Activated naive CD4-positive, alpha-beta T cell treated with anti-CD3 and anti-CD28 coated beads for 36 hours (primary cell): ENCODE measurements at regions of chr11 and their contacts with region 1.

Region 1: GRCh38 chr11:64240394-64241174 is at the start of gene FKBP2:
- DNase-seq: peak; percentile 97
- H3K4me3 Mint-ChIP-seq: peak within 1 kb of the TSS; percentile 92
- H3K27ac Mint-ChIP-seq: peak within 1 kb of the TSS; percentile 98
- H3K4me1 Mint-ChIP-seq: peaks cover 35% of the 10 kb centered on the region
- H3K27me3 Mint-ChIP-seq: no peaks in the 10 kb centered on the region
- total RNA-seq, gene FKBP2: 17.2 to 20.0 TPM

Region 2: DNA sequence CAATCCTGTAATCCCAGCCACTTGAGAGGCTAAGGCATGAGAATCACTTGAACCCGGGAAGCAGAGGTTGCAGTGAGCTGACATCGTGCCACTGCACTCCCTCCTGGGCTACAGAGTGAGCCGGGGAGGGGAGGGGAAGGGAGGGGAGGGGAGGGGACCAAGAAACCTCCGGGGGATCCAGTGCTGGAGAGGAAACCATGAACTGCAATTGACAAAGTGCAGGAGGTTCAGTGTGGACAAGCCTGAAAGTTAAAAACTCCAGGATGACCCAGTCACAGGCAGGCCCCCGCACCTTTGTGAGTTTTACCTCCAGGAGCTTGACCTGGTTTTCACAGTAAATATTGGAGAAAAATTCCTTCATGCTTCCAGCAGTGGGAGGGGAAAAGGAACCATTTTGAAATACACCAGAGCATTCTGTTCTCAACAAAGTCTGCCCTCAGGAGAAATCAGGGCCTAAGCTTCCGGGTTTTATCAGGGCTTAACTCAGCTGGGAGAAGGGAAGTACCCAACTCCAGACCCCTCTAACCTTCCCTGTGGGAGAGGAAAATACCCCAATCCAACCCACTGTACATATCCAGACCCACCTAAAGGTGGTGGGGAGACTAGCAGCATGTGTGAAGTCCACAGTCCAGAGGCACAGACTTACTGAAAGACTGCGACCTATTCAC is 456.5 kb before region 1 on chr11:
- CTCF ChIA-PET with region 1: no interaction called
- intact Hi-C with region 1: no loop called
- DNase-seq: no peak
- H3K4me3 Mint-ChIP-seq: no peak overlapping the region
- H3K27ac Mint-ChIP-seq: no peak overlapping the region
- H3K4me1 Mint-ChIP-seq: peaks cover 9% of the 10 kb centered on the region
- H3K27me3 Mint-ChIP-seq: no peaks in the 10 kb centered on the region

Region 3: GRCh38 chr11:64225612-64226506 is 14.7 kb before region 1 on chr11 and contains the starts of genes NUDT22 and TRPT1:
- CTCF ChIA-PET with region 1: interaction called, 3 read pairs
- intact Hi-C with region 1: loop called (anchors 1 kb)
- DNase-seq: peak; percentile 94
- H3K4me3 Mint-ChIP-seq: peak within 1 kb of the TSS; percentile 87
- H3K27ac Mint-ChIP-seq: peak within 1 kb of the TSS; percentile 90
- H3K4me1 Mint-ChIP-seq: peaks cover 34% of the 10 kb centered on the region
- H3K27me3 Mint-ChIP-seq: no peaks in the 10 kb centered on the region
- total RNA-seq, gene NUDT22: 51.4 to 51.9 TPM
- total RNA-seq, gene TRPT1: 18.2 to 18.3 TPM

Region 4: DNA sequence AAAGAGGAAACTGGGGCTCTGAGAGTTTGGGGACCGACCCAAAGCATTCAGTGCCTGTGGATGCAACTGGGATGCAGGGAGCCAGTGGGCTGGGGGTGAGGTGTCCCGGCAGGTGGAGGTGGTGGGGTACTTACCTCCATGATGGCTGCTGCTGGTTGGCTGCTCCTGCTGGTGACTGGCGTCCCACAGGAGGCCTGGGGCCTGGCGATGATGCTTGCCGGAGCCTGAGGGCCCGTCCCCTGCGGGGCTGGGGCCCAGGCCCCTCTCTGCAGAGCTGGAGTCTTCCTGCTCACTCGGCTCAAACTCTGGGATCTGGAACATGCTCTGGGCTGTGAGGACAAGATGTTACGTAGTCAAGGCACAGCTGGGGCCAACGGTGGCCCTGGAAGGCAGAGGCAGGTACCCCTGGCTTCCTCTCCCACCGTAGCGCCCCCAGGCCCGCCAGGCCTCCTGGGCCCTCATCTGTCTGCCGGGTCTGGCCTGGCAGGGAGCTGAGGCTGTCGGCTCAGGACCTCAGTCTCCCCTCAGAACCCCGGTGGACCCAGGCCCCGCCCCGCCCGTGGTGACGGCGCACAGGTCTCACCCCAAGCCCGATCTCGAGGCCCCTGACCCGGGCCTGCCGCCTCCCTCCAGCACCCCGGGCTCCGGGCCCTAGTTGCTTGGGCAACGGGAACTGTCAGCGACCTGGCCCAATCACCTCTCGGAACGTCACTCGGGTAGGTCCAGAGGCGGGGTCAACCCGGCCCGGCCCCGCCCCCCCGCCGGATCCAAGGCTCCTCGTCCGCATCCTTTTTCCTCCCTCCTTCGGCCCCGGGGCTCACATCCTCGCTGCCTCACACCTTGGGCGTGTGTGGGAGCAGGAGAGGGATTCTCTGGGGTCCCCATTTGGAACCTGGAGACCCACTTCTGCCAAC is 43.7 kb after region 1 on chr11 and contains the start of gene BAD:
- CTCF ChIA-PET with region 1: interaction called, 4 read pairs
- intact Hi-C with region 1: loop called (anchors 2 kb)
- DNase-seq: peak; percentile 95
- H3K4me3 Mint-ChIP-seq: peak within 1 kb of the TSS; percentile 82
- H3K27ac Mint-ChIP-seq: peak within 1 kb of the TSS; percentile 90
- H3K4me1 Mint-ChIP-seq: peaks cover 17% of the 10 kb centered on the region
- H3K27me3 Mint-ChIP-seq: no peaks in the 10 kb centered on the region
- total RNA-seq, gene BAD: 12.8 to 14.3 TPM

Region 5: DNA sequence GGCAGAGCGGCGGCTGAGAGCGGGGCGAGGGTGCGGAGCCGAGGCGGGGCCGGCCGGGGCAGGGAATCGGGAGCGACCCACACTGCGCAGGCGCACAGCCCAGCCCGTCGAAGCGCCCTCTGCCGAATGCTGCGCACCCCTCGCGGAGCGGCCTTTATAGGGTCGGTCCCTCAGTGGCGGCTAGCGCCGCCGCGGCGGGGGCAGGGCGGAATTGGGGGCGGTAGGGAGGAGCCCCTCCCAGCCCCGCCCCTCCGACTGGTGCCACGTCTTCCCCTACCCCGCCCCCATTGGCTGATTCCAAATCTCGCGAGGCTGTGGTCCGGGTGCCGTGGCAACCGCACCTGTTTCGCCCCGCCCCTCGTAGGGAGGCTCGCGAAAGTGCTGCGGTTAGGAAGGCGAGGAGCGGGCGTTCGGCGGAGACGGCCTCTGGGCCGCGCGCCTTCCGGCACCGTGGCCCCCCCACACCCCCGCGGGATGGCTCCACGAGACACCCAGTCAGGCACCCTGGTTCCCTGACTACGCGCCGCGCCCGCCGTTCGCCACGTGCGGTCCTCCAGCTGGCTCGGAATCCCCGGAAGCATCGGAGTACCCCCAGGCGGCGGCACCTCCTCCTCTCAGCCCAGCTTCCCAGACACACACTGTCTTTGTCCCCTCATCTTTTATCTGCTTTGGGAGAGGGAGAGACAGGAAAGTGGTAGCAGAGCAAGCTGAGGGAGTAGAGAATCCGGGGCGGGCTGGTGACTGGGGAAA is 638.1 kb after region 1 on chr11 and contains the start of gene EHD1:
- CTCF ChIA-PET with region 1: no interaction called
- intact Hi-C with region 1: loop called (anchors 5 kb)
- DNase-seq: peak; percentile 100
- H3K4me3 Mint-ChIP-seq: peak within 1 kb of the TSS; percentile 93
- H3K27ac Mint-ChIP-seq: peak within 1 kb of the TSS; percentile 96
- H3K4me1 Mint-ChIP-seq: peaks cover 58% of the 10 kb centered on the region
- H3K27me3 Mint-ChIP-seq: no peaks in the 10 kb centered on the region
- total RNA-seq, gene EHD1: 124 to 132 TPM

Region 6: DNA sequence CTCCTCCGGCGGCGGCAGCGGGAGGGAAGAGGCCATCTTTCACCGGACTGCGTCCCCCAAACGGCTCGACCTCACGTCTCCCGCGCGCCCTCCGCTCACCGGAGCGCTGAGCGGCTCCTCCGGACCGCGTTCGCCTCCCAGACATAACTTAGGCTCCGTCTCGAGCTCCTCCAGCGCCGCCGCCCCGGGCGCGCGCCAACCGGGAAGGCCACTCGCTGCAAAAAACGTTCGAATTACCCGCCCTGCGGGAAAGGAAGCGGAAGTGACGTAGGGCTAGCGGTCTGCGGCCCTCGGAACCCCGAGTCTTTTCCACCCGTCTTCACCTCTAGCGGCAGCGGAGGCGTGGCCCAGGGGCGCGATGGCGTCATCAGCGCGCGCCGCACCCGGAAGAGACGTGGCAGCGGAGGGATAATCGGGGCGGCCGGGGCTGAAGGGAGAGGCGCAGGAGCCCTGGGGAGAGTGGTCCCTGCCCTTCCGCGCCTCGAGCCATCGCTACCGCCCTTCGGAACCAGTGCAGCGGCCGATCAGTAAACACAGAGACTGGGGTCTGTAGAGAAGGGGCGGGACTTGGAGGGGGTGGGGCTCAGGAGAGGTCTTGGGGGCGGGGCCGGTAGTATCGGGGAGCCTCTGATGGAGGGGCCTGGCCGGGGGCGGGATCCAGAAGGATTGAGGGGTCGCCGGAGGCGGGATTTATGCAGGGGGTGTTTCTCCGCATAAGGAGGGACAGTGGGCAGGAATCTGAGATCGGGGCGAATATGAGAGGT is 843.4 kb after region 1 on chr11 and contains the starts of genes CDCA5 and ZFPL1:
- CTCF ChIA-PET with region 1: no interaction called
- intact Hi-C with region 1: loop called (anchors 10 kb)
- DNase-seq: peak; percentile 97
- H3K4me3 Mint-ChIP-seq: peak within 1 kb of the TSS; percentile 92
- H3K27ac Mint-ChIP-seq: peak within 1 kb of the TSS; percentile 97
- H3K4me1 Mint-ChIP-seq: peaks cover 39% of the 10 kb centered on the region
- H3K27me3 Mint-ChIP-seq: no peaks in the 10 kb centered on the region
- total RNA-seq, gene CDCA5: 169 to 174 TPM
- total RNA-seq, gene ZFPL1: 24.2 to 25.6 TPM